Posterior vena cava (tissue), 2 donors: ENCODE measurements at regions of chr15 and their contacts with region 1.

Region 1: DNA sequence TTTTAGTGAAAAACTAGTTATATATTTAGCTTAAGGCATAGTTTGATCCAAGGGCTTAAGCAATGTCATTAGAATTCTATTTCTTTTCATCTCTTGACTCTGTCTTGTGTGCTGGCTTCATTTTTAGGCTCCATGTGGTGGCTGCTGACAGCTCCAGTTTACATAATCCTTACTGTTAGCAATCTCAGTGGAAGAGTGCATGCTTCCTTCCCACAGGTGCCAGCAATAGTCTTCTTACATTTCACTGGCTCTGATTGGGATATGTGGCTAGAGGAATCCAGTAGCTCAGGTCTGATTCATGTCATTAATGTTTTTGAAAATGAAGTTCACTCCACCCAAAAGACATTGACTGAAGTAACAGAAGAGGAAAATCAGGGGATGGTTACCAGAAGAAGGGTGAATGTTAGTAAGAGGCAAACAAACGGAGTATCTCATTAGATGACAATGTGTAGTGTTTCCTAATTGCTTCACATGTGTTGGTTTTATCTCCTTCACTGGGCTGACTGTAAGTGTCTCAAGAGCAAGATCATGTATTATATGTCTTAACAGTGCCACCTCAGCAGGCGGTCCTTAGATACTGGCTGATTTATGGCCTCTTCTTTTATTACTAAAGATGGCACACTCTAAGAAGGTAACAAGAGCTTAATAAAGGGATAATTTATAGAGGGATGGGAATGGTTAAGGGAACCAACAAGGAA is 25.6 kb upstream of the TCF12 start:
- DNase-seq: no peak

Region 2: DNA sequence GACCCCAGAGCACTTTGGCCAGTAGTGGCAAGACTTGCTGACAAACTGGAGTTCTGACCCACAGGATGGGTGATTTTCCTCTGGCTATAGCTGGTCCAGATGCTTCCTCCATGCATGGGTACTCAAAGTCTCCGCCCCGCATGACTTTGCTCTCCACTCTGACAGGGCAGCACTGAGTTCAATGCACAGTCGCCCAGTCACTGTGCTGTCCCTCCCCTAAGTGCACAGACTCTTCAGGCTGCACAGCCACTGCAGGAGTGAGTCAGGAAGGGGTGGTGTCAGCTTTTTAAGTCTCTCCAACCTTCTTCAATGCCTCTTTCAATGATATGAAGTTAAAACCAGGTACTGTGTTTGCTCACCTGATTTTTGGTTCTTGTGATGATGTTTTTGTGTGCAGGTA is 509.8 kb before region 1 on chr15:
- intact Hi-C with region 1: no loop called
- DNase-seq: no peak

Region 3: GRCh38 chr15:56844892-56845291 is 47.9 kb before region 1 on chr15:
- intact Hi-C with region 1: no loop called
- DNase-seq: no peak

Region 4: DNA sequence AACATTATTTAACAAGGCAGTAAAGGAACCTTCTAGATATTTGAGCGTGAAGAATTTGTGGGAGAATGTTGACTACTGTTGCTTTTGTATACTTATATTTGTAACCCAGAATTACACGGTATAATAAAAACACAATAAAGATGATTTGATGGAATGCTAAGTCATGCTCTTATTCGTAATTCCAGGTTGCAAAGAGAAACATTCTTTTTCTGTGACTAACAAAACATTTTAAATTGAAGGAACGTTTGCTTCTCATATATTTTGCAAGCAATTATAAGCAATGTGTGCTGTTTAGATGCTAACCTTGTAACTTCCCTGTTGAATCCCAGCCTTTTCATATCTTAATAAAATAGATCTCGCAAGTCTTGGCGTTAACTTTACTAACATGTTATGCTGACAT is 359.1 kb after region 1 on chr15:
- intact Hi-C with region 1: loop called in 1 of 2 experiments (anchors 5 kb)
- DNase-seq: no peak